ENCODE measurements at regions of chr1 and their contacts with region 1.

Region 1: DNA sequence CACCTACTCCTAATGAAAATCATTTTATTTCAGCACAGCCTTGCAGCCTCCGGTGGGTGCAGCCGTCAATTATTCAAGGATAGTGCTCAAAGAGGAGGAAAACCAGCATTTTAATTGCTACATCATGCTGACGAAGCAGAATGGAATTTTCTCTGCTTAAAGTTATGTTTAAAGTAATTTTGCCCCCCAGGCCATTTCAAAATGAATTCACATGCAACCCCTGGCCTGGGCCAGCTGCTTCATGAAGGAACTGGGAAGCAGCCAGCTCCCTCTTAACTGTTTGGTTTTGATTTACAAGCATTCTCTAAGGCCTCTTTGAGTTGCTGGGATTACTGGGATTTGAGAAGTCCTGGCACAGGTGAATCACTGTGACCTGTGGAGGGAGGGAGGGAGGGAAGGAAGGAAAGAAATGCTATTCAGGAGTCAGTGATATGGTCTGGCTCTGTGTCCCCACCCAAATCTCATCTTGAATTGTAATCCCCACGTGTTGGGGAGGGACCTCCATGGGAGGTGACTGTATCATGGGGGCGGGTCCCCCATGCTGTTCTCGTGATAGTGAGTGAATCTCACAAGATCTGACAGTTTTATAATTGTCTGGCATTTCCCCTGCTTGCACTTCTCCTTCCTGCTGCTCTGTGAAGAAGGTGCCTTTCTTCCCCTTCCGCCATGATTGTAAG is 66.0 kb downstream of the PGBD5 start:
- DNase-seq: no peak
- H3K4me3 ChIP-seq: no peak overlapping the region
- H3K27ac ChIP-seq: no peak overlapping the region
- H3K4me1 ChIP-seq: no peaks in the 10 kb centered on the region
- H3K27me3 ChIP-seq: peaks cover 0 to 9% of the 10 kb centered on the region in 2 donors
- CTCF ChIP-seq: no peak
- POLR2A ChIP-seq: no peak

Region 2: DNA sequence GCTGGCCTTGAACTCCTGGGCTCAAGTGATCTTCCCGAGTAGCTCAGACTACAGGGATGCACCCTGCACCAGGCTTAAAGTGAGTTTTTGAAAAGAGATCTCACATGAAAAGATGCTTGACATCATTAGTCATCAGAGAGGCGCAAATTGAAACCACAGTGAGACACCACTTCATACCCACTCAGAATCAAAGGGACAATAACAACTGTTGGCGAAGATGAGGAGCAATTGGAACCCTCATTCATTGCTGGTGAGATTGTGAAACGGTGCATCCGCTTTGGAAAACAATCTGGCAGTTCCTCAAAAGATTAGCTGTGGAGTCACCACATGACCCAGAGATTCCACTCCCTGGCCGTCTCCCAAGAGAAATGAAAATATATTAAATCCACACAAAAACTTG is 56.3 kb before region 1 on chr1:
- intact Hi-C with region 1: no loop called
- DNase-seq: no peak
- H3K4me3 ChIP-seq: no peak overlapping the region
- H3K27ac ChIP-seq: no peak overlapping the region
- H3K4me1 ChIP-seq: peaks cover 0 to 4% of the 10 kb centered on the region in 2 donors
- H3K27me3 ChIP-seq: no peaks in the 10 kb centered on the region
- CTCF ChIP-seq: no peak
- POLR2A ChIP-seq: no peak

Region 3: DNA sequence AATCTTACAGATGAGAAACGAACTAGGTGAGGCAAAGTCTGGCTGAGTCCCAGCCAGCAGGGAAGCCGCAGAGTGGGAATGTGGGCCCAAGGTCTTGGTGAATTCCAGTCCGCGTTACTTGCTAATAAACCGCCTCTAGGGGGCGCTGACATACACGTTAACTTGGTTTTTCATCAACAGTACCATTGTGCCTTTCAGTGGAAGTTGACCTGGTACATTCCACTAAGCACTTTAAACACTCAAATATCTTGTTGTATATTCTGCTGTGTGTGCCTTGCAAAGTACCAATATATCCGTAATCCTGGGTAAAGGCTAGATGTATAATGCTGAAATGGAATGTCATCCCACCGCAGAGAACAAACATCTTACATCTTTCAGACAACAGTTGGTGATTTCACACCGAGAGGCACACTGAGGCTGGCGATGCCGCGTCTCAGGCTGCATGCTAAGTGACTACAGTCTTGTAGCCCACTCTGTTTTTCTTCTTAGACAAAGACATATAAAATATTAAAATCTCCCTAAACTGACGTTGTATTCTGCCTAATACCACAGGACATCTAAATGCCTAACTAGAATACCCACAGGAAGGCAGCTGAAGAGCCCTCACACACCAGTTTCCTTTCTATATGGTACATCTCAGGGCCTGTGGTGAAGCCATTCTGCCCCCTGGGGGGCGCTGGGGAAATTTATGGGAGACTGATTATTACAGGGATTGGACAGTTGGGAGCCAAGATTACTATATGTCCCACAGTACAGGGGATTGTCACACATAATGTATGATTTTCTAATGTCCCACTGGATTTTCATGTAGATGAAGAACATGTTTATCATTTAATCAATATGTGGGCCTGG is 557.4 kb after region 1 on chr1:
- intact Hi-C with region 1: loop called (anchors 5 kb)
- DNase-seq: peak; percentile 27 to 59
- H3K4me3 ChIP-seq: no peak overlapping the region
- H3K27ac ChIP-seq: no peak overlapping the region
- H3K4me1 ChIP-seq: no peaks in the 10 kb centered on the region
- H3K27me3 ChIP-seq: no peaks in the 10 kb centered on the region
- CTCF ChIP-seq: peak in 2 of 3 donors; percentile 47 to 57
- POLR2A ChIP-seq: no peak

Measured in breast epithelium (tissue), 4 donors.